ENCODE measurements at regions of chr1 and their contacts with region 1.

Region 1: GRCh38 chr1:153946622-153947241 is at the start of gene DENND4B:
- DNase-seq: peak; percentile 83
- H3K4me3 Mint-ChIP-seq: peak within 1 kb of the TSS; percentile 92
- H3K27ac Mint-ChIP-seq: peak within 1 kb of the TSS; percentile 97
- H3K4me1 Mint-ChIP-seq: peaks cover 25% of the 10 kb centered on the region
- H3K27me3 Mint-ChIP-seq: no peaks in the 10 kb centered on the region
- total RNA-seq, gene DENND4B: 98.1 to 108 TPM

Region 2: GRCh38 chr1:153796791-153797659 is 149.7 kb before region 1 on chr1:
- CTCF ChIA-PET with region 1: interaction called, 12 read pairs
- POLR2A ChIA-PET with region 1: no interaction called
- intact Hi-C with region 1: loop called (anchors 1 kb)
- DNase-seq: peak; percentile 89
- H3K4me3 Mint-ChIP-seq: no peak overlapping the region
- H3K27ac Mint-ChIP-seq: no peak overlapping the region
- H3K4me1 Mint-ChIP-seq: peaks cover 3% of the 10 kb centered on the region
- H3K27me3 Mint-ChIP-seq: peaks cover 1% of the 10 kb centered on the region

Region 3: DNA sequence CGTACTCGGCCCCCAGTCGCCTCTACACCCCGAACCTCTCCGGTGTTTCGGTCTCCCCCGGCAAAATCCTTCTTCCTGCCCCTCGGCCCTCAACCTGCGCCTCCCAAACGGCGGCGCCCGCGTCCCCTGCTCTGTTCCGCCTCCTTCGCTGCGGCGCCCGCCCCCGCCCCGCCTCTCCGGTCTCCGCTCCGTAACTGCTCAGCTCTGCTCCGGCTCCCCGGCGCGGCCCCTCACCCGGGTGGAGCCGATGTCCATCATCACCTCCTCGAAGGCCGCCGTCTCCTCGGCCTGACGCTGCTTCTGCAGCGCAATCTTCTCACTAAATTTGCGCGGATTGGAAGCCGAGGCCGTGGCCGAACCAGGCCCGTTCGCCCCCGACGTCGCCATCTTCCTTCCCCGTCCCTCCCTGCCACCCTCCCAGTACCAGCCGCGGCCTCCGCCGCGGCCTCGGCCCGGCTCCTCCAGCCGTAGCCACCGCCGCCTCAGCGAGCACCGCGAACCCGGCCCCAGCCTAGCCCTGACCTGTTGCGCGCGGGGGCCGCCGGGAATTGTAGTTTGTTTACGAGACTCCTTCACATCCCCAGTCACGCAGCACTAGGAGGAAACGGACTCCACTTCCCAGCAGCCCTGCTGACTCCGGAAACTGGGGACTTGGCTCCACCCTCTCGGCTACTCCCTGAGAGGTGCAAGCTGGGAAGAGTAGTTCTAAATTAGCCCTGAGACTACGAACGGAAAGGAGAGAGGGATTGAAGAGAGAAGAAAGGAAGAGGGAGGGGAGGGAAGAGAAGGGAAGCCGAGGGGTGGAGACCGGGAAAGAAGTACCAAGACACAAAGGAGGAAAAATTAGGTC is 11.6 kb after region 1 on chr1 and contains the start of gene CRTC2:
- CTCF ChIA-PET with region 1: interaction called, 31 read pairs
- POLR2A ChIA-PET with region 1: interaction called, 21 read pairs
- intact Hi-C with region 1: loop called (anchors 1 kb)
- DNase-seq: peak; percentile 99
- H3K4me3 Mint-ChIP-seq: peak within 1 kb of the TSS; percentile 97
- H3K27ac Mint-ChIP-seq: peak within 1 kb of the TSS; percentile 96
- H3K4me1 Mint-ChIP-seq: peaks cover 51% of the 10 kb centered on the region
- H3K27me3 Mint-ChIP-seq: no peaks in the 10 kb centered on the region
- total RNA-seq, gene CRTC2: 60.8 to 78.0 TPM